Activated CD4-positive, alpha-beta T cell treated with anti-CD3 and anti-CD28 coated beads for 36 hours (primary cell): ENCODE measurements at regions of chr14 and their contacts with region 1.

Region 1: DNA sequence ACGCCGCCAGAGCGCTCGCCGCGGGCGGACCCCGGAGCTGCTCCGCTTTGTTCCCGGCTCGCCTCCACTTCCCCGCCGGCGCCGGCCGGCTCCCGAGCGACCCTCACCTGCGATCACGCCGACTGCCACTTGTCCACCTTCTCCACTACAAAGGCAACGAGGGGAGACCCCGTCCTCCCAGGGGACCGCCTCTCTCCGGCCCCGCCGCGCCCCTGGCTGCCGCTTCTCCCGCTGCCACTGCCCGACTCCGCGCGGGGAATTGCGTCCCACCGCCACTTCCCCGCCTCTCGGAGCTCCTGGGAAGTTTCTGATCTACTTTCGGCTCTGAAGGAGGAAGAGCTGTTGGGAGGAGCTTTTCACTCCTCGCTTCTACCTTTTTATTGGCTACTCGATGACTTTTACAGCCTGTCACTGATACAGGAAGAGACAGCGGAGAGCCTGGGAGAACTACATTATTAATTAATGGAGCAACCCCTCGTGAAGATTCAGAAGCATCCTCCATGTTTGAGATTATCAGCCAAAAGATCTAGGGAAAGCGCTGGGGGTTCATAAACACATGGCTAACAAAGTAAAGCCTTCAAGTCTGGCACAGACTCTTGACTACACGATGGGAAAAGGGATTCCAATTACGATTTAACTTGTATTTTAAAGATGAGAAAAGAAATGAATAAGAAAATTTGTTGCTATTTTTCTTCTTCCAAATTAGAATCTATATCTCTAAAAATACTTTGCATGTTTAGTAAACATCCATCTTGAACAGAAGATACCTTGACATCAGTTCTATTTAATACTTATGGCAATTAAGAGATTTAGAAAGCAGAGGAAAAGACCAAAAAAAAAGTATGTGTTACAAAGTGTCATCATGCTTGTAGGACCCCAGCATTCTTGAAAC is at the start of gene BAZ1A:
- DNase-seq: peak; percentile 50
- ATAC-seq: peak; percentile 9
- H3K4me3 Mint-ChIP-seq: peak within 1 kb of the TSS; percentile 99
- H3K27ac Mint-ChIP-seq: peak within 1 kb of the TSS; percentile 98
- H3K4me1 Mint-ChIP-seq: peaks cover 29% of the 10 kb centered on the region
- H3K27me3 Mint-ChIP-seq: no peaks in the 10 kb centered on the region
- total RNA-seq, gene BAZ1A: 53.9 to 75.2 TPM

Region 2: GRCh38 chr14:34465068-34465859 is 410.0 kb before region 1 on chr14:
- CTCF ChIA-PET with region 1: no interaction called
- POLR2A ChIA-PET with region 1: no interaction called
- intact Hi-C with region 1: no loop called
- DNase-seq: no peak
- ATAC-seq: no peak
- H3K4me3 Mint-ChIP-seq: no peak overlapping the region
- H3K27ac Mint-ChIP-seq: no peak overlapping the region
- H3K4me1 Mint-ChIP-seq: peaks cover 17% of the 10 kb centered on the region
- H3K27me3 Mint-ChIP-seq: no peaks in the 10 kb centered on the region

Region 3: GRCh38 chr14:34629657-34630529 is 245.4 kb before region 1 on chr14 and contains the start of gene SNX6:
- CTCF ChIA-PET with region 1: no interaction called
- POLR2A ChIA-PET with region 1: interaction called, 3 read pairs
- intact Hi-C with region 1: loop called in 1 of 2 experiments (anchors 2 kb)
- DNase-seq: peak; percentile 93
- ATAC-seq: peak; percentile 98
- H3K4me3 Mint-ChIP-seq: peak within 1 kb of the TSS; percentile 97
- H3K27ac Mint-ChIP-seq: peak within 1 kb of the TSS; percentile 98
- H3K4me1 Mint-ChIP-seq: peaks cover 25% of the 10 kb centered on the region
- H3K27me3 Mint-ChIP-seq: no peaks in the 10 kb centered on the region
- total RNA-seq, gene SNX6: 77.3 to 78.7 TPM

Region 4: DNA sequence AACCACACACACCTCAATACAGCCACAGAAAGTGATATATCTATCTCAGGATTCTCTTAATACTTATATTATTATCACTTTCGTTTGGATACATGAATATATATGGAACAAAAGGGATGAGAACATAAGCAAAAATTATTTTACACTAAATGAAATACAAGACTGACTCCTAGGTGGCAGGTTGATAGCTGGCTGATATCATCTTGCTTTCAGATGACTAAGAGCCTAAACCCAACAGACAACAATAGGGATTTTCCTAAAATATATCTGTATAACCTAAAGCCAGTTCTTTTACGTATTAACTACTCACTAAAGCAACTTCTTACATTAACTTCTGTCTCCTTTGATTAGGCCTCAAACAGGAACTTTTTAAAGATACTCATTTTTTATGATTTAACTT is 65.2 kb before region 1 on chr14:
- CTCF ChIA-PET with region 1: interaction called, 3 read pairs
- POLR2A ChIA-PET with region 1: no interaction called
- intact Hi-C with region 1: loop called in 1 of 2 experiments (anchors 5 kb)
- DNase-seq: no peak
- ATAC-seq: peak; percentile 51
- H3K4me3 Mint-ChIP-seq: no peak overlapping the region
- H3K27ac Mint-ChIP-seq: no peak overlapping the region
- H3K4me1 Mint-ChIP-seq: peaks cover 15% of the 10 kb centered on the region
- H3K27me3 Mint-ChIP-seq: no peaks in the 10 kb centered on the region

Region 5: GRCh38 chr14:34931206-34931605 is 55.9 kb after region 1 on chr14:
- CTCF ChIA-PET with region 1: interaction called, 3 read pairs
- POLR2A ChIA-PET with region 1: interaction called, 6 read pairs
- intact Hi-C with region 1: loop called (anchors 1 kb)
- DNase-seq: peak; percentile 25
- ATAC-seq: peak; percentile 72
- H3K4me3 Mint-ChIP-seq: peak overlapping the region; percentile 47
- H3K27ac Mint-ChIP-seq: peak overlapping the region; percentile 100
- H3K4me1 Mint-ChIP-seq: peaks cover 44% of the 10 kb centered on the region
- H3K27me3 Mint-ChIP-seq: no peaks in the 10 kb centered on the region

Region 6: DNA sequence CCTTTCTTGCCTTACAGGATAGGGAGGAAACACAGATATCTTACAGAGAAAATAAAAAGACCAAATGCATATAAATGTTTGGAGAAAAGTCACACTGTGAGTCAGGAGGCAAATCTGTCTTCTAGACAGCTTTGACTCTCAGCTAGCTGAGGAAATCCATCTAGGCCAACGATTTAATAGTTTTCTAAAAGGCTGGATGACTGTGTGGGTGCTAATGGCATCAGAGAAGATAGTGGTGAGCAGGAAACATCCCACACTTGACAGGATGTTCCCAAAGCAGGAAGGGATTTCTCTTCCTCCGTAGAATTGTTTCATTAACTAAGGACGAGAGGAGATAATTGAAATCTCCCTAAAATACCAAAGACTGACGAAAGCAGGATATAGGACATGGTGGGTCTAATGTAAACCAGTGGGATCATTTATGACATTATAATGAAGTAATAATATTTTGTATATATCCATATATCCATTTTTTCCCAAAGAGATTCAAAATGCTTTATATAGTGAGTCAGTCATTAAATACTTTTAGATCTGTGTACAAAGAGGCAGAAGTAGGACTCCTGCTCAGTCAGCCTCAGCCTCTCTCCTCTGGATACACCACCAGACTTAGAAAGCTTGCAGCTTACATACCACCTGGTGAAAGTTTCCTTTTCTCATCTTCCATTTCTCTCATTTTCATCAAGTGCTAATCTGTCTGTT is 372.6 kb after region 1 on chr14:
- CTCF ChIA-PET with region 1: no interaction called
- POLR2A ChIA-PET with region 1: no interaction called
- intact Hi-C with region 1: no loop called
- DNase-seq: no peak
- ATAC-seq: no peak
- H3K4me3 Mint-ChIP-seq: no peak overlapping the region
- H3K27ac Mint-ChIP-seq: peak overlapping the region; percentile 27
- H3K4me1 Mint-ChIP-seq: peaks cover 14% of the 10 kb centered on the region
- H3K27me3 Mint-ChIP-seq: no peaks in the 10 kb centered on the region

Region 7: GRCh38 chr14:35808076-35808652 is 932.9 kb after region 1 on chr14:
- CTCF ChIA-PET with region 1: no interaction called
- POLR2A ChIA-PET with region 1: no interaction called
- intact Hi-C with region 1: loop called in 1 of 2 experiments (anchors 10 kb)
- DNase-seq: peak; percentile 54
- ATAC-seq: no peak
- H3K4me3 Mint-ChIP-seq: peak overlapping the region; percentile 95
- H3K27ac Mint-ChIP-seq: peak overlapping the region; percentile 97
- H3K4me1 Mint-ChIP-seq: peaks cover 24% of the 10 kb centered on the region
- H3K27me3 Mint-ChIP-seq: no peaks in the 10 kb centered on the region